HAP-1 (cell line): ENCODE measurements at regions of chr11 and their contacts with region 1.

Region 1: GRCh38 chr11:124763156-124763947 is 1.3 kb upstream of the ESAM start:
- DNase-seq: peak; percentile 80 to 95
- H3K4me3 ChIP-seq: peak overlapping the region; percentile 53
- H3K4me1 ChIP-seq: peaks cover 7% of the 10 kb centered on the region; the same call in 1 of the 2 replicates
- H3K27me3 ChIP-seq: no peaks in the 10 kb centered on the region

Region 2: GRCh38 chr11:124673333-124674167 is 89.8 kb before region 1 on chr11 and contains the starts of genes SIAE and SPA17:
- in situ Hi-C with region 1: loop called (anchors 5 kb)
- DNase-seq: peak; percentile 92 to 97
- H3K4me3 ChIP-seq: peak within 1 kb of the TSS; percentile 79
- H3K4me1 ChIP-seq: peaks cover 11% of the 10 kb centered on the region
- H3K27me3 ChIP-seq: no peaks in the 10 kb centered on the region

Region 3: GRCh38 chr11:124837491-124837856 is 74.1 kb after region 1 on chr11:
- in situ Hi-C with region 1: loop called (anchors 10 kb)
- DNase-seq: peak; percentile 49 to 76
- H3K4me3 ChIP-seq: no peak overlapping the region
- H3K4me1 ChIP-seq: peaks cover 24% of the 10 kb centered on the region
- H3K27me3 ChIP-seq: peaks cover 32% of the 10 kb centered on the region